ENCODE measurements at regions of chr16 and their contacts with region 1.

Region 1: DNA sequence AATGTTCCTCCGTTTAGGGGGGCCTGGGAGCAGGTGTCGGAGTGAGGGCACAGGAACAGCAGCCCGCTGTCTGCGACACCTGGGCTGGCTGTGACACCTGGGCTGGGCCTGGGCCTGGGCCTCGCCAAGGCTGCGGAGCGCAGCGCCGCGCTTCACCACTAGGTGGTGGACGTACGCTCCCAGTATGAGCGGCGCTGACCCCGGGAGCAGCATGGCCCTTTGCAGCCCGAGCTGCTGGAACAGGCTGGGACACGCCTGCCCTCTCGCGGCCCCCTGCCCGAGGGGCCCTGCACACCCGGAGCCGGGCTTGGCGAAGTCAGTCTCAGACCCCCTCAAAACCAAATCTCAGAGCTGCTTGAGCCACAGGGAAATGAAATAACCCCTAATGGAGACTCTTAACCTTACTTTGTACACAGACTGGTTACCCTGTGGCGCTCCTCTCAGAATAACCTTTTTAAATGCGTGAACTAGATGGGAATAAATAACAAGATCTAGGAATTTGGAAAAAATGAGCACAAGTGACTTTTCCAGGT is 38.6 kb upstream of the FA2H start:
- DNase-seq: peak; percentile 11
- ATAC-seq: peak; percentile 100
- H3K4me3 ChIP-seq: no peak overlapping the region; the same call in 1 of the 2 replicates
- H3K27ac ChIP-seq: no peak overlapping the region
- H3K4me1 ChIP-seq: no peaks in the 10 kb centered on the region
- H3K27me3 ChIP-seq: no peaks in the 10 kb centered on the region; a peak in 1 of 4 replicates
- CTCF ChIP-seq: peak; percentile 96 to 99 (median 98); a peak in 5 of 6 replicates
- EP300 ChIP-seq: no peak
- POLR2A ChIP-seq: no peak
- RAD21 ChIP-seq: peak; percentile 80

Region 2: GRCh38 chr16:74709441-74709877 is 103.7 kb before region 1 on chr16:
- CTCF ChIA-PET with region 1: interaction called, 6 read pairs
- POLR2A ChIA-PET with region 1: no interaction called
- RAD21 ChIA-PET with region 1: interaction called, 6 read pairs
- SMC1A ChIA-PET with region 1: interaction called, 3 read pairs
- in situ Hi-C with region 1: no loop called
- intact Hi-C with region 1: loop called (anchors 1 kb)
- DNase-seq: no peak
- ATAC-seq: peak; percentile 99
- H3K4me3 ChIP-seq: no peak overlapping the region
- H3K27ac ChIP-seq: no peak overlapping the region
- H3K4me1 ChIP-seq: no peaks in the 10 kb centered on the region
- H3K27me3 ChIP-seq: no peaks in the 10 kb centered on the region
- CTCF ChIP-seq: peak; percentile 95 to 99 (median 97)
- EP300 ChIP-seq: no peak
- POLR2A ChIP-seq: no peak
- RAD21 ChIP-seq: peak; percentile 94